ENCODE measurements at regions of chr2 and their contacts with region 1.

Region 1: GRCh38 chr2:134218930-134219658 is 34.8 kb upstream of the MGAT5 start:
- DNase-seq: peak; percentile 62
- ATAC-seq: peak; percentile 57
- H3K4me3 Mint-ChIP-seq: peak overlapping the region; percentile 13
- H3K27ac Mint-ChIP-seq: peak overlapping the region; percentile 56
- H3K4me1 Mint-ChIP-seq: peaks cover 50% of the 10 kb centered on the region
- H3K27me3 Mint-ChIP-seq: no peaks in the 10 kb centered on the region

Region 2: DNA sequence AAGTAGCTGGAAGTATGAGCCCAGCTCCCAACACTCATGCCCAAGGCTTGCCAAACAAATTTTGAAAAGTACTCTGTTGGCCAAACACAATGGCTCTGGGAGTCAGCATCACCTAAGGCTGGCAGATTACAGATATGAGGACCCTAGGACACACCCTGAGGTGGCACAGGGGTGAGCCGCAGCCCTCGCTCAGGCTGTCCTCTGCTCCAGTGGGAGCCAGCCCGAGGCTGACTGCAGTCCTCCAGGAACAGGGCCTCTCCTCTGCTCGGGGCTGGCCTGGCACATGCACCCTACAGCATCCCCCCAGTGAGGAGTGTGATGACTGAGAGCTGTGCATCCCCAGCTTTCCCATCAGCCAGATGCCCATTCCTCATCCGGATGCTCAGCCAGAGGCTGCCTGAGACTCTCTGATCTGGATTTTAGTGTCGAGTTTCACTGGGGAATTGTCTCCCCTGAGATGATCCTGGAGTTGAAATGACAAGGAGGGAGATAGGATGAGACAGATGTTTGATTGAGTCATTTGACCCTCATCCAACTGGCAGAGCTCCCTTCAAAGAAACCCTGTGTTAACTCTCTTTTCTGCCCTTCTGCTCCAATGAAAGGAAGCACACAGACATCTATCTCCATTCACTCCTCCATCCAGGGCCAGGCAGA is 381.5 kb before region 1 on chr2:
- CTCF ChIA-PET with region 1: no interaction called
- DNase-seq: no peak
- ATAC-seq: no peak
- H3K4me3 Mint-ChIP-seq: no peak overlapping the region
- H3K27ac Mint-ChIP-seq: no peak overlapping the region
- H3K4me1 Mint-ChIP-seq: no peaks in the 10 kb centered on the region
- H3K27me3 Mint-ChIP-seq: no peaks in the 10 kb centered on the region

Region 3: DNA sequence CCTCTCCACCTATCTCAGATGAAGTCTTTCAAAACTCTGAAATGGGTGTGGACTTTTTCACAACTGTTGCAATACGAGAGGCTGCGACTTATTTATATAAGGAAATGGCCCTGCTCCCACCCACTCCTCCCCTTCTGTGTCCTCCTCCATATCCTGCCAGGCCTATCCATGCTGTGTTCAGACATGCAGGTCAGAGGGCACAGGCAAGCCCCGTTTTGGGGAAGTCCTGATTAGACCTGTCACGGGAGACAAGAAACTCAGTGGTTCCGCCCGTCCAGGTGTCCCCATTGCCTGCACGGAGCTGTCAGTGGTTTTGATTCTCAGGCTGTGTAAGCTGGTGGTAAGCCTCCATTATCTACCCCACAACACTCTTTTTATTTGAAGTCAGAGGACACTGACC is 64.8 kb before region 1 on chr2:
- CTCF ChIA-PET with region 1: no interaction called
- DNase-seq: no peak
- ATAC-seq: no peak
- H3K4me3 Mint-ChIP-seq: no peak overlapping the region
- H3K27ac Mint-ChIP-seq: no peak overlapping the region
- H3K4me1 Mint-ChIP-seq: no peaks in the 10 kb centered on the region
- H3K27me3 Mint-ChIP-seq: no peaks in the 10 kb centered on the region

Region 4: DNA sequence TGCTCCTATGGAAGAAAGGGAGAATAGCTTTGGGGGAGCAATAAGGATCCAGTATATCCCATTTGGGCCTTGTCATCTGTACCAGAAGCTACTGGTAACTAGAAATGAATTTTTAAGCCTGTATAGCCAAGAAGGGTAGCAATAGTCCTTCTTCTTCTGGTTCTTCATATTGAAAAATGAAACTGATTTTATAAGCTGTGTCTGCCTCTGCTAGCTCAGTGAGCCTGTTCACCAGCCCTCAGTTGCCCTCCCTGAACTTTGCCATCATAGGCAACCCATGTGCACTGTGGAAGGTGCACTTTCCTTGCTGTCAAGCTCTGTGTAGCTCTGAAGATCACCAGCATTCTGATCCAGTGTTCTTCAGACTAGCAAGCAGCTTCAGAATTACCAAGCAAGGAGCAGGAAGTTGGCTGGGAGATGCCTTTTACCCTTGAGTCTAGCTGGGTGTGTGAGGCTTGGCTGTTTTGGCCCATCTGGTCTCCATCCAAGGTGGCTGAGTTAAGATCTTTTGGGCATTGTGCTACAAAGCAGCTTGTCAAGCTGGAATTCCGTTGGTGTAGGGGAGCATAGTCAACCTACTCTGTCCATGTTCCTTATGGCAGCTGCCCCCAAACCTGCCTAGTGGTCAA is 21.0 kb before region 1 on chr2:
- CTCF ChIA-PET with region 1: interaction called, 13 read pairs
- DNase-seq: peak; percentile 39
- ATAC-seq: no peak
- H3K4me3 Mint-ChIP-seq: no peak overlapping the region
- H3K27ac Mint-ChIP-seq: peak overlapping the region; percentile 14
- H3K4me1 Mint-ChIP-seq: peaks cover 26% of the 10 kb centered on the region
- H3K27me3 Mint-ChIP-seq: no peaks in the 10 kb centered on the region

Region 5: GRCh38 chr2:134290358-134290757 is 71.3 kb after region 1 on chr2:
- CTCF ChIA-PET with region 1: no interaction called
- DNase-seq: peak; percentile 63
- ATAC-seq: peak; percentile 85
- H3K4me3 Mint-ChIP-seq: no peak overlapping the region
- H3K27ac Mint-ChIP-seq: no peak overlapping the region
- H3K4me1 Mint-ChIP-seq: peaks cover 23% of the 10 kb centered on the region
- H3K27me3 Mint-ChIP-seq: peaks cover 17% of the 10 kb centered on the region

Measured in activated CD8-positive, alpha-beta memory T cell treated with anti-CD3 and anti-CD28 coated beads, Interleukin-2, amount 10 ng/mL, durations not matched to agents 7 days and 5 days (primary cell).